HepG2 (cell line): ENCODE measurements at regions of chr2 and their contacts with region 1.

Region 1: DNA sequence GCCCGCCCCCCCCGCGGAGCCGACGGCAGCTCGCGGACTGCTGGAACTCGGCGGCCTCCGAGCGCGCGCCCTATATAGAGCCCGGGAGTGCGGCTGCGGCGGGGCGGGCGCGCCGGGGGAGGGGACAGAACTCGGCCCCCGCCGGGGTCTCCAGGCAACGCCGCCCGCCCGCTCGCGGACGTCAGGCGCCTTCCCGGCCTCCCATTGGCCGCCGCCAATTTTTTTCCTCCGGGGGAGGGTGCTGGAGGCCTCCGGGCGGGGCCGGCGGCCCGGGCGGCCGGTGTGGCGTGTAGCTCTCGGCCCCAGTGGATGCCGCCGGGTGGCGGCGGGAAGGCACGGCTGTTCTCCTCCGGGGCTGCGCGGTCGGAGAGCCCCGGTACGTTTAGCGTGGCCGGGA is at the start of gene ZFP36L2:
- DNase-seq: peak; percentile 92
- ATAC-seq: peak; percentile 63
- H3K4me3 ChIP-seq: peak within 1 kb of the TSS; percentile 80 to 97 (median 89)
- H3K27ac ChIP-seq: peak within 1 kb of the TSS; percentile 95
- H3K4me1 ChIP-seq: peaks cover 54% of the 10 kb centered on the region
- H3K27me3 ChIP-seq: no peaks in the 10 kb centered on the region
- CTCF ChIP-seq: no peak; the same call in 1 of the 2 replicates
- EP300 ChIP-seq: peak in 1 of 2 experiments; percentile 15; a peak in 1 of 4 replicates
- POLR2A ChIP-seq: peak in 1 of 2 experiments; percentile 98; a peak in 2 of 4 replicates
- RAD21 ChIP-seq: peak; percentile 36; the same call in 1 of the 2 replicates
- total RNA-seq, gene ZFP36L2: 21.8 and 32.5 TPM in 2 replicates

Region 2: DNA sequence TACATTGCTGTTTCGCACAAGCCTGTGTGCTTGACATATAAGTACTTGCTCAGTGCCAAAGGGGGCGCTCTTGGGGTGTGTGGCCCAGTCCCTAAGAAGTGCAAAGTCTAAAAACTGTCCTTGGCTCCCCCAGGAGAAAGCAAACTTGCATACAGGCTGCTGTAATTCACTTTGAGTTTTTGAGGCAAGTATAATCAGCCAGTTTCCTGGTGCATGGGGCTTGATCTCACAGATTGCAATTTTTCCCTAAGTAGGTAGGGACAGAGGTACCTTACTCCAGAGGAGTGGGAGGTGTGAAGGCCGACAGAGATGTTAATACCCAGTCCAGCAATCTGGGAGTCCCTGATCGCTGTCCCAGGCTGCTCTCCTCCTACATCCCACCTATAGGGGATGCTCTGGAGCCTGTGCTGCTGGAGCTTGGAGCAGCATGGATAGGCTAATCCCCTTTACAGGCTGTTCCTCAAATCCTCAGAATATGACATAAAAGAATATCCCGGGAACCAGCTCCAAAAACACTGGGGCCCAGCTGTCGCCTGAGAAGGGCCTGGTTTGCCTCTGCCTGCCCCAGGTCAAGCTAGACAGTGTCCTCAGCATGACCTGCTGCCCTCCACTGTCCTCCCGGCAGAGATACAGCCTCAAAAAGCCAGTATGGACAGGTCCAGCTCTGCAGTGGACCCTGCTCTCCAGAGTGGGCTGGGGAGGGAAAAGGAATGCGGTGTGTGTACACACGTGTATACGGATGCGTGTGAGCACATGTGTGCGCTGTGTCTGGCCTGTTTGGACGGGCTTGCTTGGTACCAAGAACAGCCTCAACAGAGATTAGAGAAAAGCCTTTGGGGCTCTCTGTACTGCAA is 297.6 kb before region 1 on chr2:
- CTCF ChIA-PET with region 1: interaction called, 3 read pairs
- POLR2A ChIA-PET with region 1: interaction called, 37 read pairs
- in situ Hi-C with region 1: loop called (anchors 5 kb)
- intact Hi-C with region 1: no loop called
- DNase-seq: peak; percentile 90
- ATAC-seq: peak; percentile 54
- H3K4me3 ChIP-seq: peak overlapping the region; percentile 52 to 74 (median 62)
- H3K27ac ChIP-seq: peak overlapping the region; percentile 88
- H3K4me1 ChIP-seq: peaks cover 98% of the 10 kb centered on the region
- H3K27me3 ChIP-seq: no peaks in the 10 kb centered on the region
- CTCF ChIP-seq: peak; percentile 78
- EP300 ChIP-seq: peak in 1 of 2 experiments; percentile 70; a peak in 1 of 4 replicates
- POLR2A ChIP-seq: no peak
- RAD21 ChIP-seq: no peak

Region 3: DNA sequence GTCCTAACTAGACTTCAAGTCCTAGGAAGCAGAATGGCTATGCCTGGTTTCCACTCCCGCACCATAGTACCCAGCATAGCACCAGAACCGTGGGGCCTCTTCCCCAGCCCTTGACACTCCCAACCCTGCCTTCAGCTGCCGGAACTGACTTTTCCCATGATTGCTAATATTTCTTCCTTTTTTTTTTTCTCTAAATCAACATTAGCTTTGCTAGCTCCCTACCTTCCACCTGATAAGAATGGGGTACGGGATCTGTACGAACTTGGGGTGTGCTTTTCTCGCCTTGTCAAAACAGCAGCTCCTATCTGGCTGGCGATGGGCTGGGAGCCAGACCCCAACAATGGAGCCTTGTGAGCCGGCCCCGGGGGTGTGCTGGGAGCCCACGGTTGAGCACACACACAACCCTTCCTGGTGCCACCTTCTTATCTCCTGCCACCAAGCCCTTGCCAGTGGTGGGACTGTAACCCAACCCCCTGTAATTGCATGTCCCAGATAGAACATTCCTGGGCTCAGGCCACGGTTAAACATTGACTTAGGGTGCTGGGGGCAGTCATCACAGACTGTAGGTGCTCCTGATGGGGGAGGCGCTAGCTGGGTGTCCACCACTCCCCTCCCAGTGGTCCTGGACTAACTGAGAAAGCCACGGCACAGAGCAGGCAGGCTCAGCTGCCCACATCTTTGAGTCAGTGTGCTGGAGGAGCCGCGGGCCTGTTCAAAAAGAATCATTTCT is 221.1 kb before region 1 on chr2:
- CTCF ChIA-PET with region 1: no interaction called
- POLR2A ChIA-PET with region 1: interaction called, 22 read pairs
- in situ Hi-C with region 1: no loop called
- intact Hi-C with region 1: no loop called
- DNase-seq: peak; percentile 99
- ATAC-seq: peak; percentile 96
- H3K4me3 ChIP-seq: peak overlapping the region; percentile 27 to 67 (median 39); a peak in 5 of 6 replicates
- H3K27ac ChIP-seq: peak overlapping the region; percentile 75
- H3K4me1 ChIP-seq: peaks cover 85% of the 10 kb centered on the region
- H3K27me3 ChIP-seq: no peaks in the 10 kb centered on the region
- CTCF ChIP-seq: peak; percentile 54
- EP300 ChIP-seq: peak in 1 of 2 experiments; percentile 90; a peak in 2 of 4 replicates
- POLR2A ChIP-seq: peak; percentile 36 to 92; a peak in 3 of 4 replicates
- RAD21 ChIP-seq: no peak

Region 4: DNA sequence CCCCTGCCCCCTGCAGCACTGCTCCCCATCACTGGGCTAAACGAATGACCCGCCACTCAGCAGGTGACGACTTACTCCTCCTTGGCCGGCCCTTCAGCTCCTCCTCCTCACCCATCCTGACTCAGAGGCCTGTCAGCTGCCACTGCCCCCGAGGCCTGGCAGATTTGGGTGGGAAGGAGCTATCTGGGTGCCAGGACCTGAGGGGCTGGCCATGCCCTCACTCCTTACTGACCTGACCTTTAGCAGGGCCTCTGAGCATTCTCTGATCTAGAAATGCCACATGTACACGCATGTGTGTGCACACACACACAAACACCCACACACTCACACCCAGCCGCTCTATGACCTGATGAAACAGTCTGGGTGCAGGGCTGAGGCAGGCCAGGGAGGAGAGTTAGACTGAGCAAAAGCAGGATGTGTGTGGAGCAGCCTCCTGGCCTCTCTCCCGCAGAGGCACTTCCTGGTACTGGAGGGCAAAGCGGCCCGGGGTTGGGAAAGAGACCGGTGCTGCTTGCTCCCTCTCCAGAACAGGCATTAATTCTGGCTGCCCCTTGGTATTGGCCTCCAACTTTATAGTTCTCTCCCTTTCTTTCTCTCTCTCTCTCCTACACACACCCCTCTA is 68.2 kb before region 1 on chr2:
- CTCF ChIA-PET with region 1: interaction called, 3 read pairs
- POLR2A ChIA-PET with region 1: interaction called, 76 read pairs
- in situ Hi-C with region 1: loop called (anchors 10 kb)
- intact Hi-C with region 1: loop called (anchors 2 kb)
- DNase-seq: peak; percentile 74
- ATAC-seq: peak; percentile 47
- H3K4me3 ChIP-seq: peak overlapping the region; percentile 39 to 70 (median 53)
- H3K27ac ChIP-seq: peak overlapping the region; percentile 57
- H3K4me1 ChIP-seq: peaks cover 90% of the 10 kb centered on the region
- H3K27me3 ChIP-seq: no peaks in the 10 kb centered on the region
- CTCF ChIP-seq: no peak
- EP300 ChIP-seq: no peak; a peak in 1 of 4 replicates
- POLR2A ChIP-seq: peak in 1 of 2 experiments; percentile 63; a peak in 3 of 4 replicates
- RAD21 ChIP-seq: 0 out of 2 replicates have a peak, but pooled peaks have one; percentile 7

Region 5: GRCh38 chr2:43210467-43211303 is 15.9 kb before region 1 on chr2:
- CTCF ChIA-PET with region 1: no interaction called
- POLR2A ChIA-PET with region 1: interaction called, 83 read pairs
- in situ Hi-C with region 1: no loop called
- intact Hi-C with region 1: no loop called
- DNase-seq: peak; percentile 72
- ATAC-seq: peak; percentile 75
- H3K4me3 ChIP-seq: peak overlapping the region in 1 of 3 experiments; percentile 38; a peak in 1 of 6 replicates
- H3K27ac ChIP-seq: peak overlapping the region; percentile 43
- H3K4me1 ChIP-seq: peaks cover 58% of the 10 kb centered on the region
- H3K27me3 ChIP-seq: no peaks in the 10 kb centered on the region
- CTCF ChIP-seq: peak; percentile 48
- EP300 ChIP-seq: peak in 1 of 2 experiments; percentile 82; a peak in 2 of 4 replicates
- POLR2A ChIP-seq: no peak
- RAD21 ChIP-seq: no peak

Region 6: GRCh38 chr2:43276962-43277391 is 50.4 kb after region 1 on chr2:
- CTCF ChIA-PET with region 1: no interaction called
- POLR2A ChIA-PET with region 1: no interaction called
- in situ Hi-C with region 1: no loop called
- intact Hi-C with region 1: no loop called
- DNase-seq: no peak
- ATAC-seq: no peak
- H3K4me3 ChIP-seq: no peak overlapping the region
- H3K27ac ChIP-seq: no peak overlapping the region
- H3K4me1 ChIP-seq: peaks cover 20% of the 10 kb centered on the region
- H3K27me3 ChIP-seq: no peaks in the 10 kb centered on the region
- CTCF ChIP-seq: no peak
- EP300 ChIP-seq: no peak
- POLR2A ChIP-seq: no peak
- RAD21 ChIP-seq: no peak

Region 7: DNA sequence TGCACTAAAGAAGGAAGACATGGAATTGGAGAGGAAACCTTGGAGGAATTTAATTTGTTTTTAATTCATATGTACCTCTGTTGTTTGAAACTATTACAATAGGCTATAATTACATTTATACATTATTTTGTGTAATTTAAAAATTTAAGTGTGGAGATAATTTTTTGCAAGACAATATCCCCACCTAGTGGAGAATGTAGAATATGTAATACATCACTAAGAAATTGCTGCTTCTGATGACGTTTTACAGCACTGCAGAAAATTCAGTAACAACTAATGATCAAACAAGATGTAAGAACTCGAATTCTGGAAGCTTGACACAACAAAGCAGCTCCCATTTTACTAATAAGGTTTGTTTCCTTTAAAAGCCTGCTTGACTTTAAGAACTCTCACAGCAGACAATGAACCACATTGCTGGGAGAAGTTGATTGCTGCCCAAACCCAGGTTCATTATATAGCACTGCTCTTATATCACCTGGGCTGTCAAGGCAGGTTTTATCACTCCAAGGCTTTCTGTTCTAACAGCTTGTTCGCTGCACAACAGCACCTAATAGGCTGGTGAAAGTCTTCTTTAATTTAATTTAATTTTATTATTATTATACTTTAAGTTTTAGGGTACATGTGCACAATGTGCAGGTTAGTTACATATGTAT is 315.9 kb after region 1 on chr2:
- CTCF ChIA-PET with region 1: interaction called, 3 read pairs
- POLR2A ChIA-PET with region 1: no interaction called
- in situ Hi-C with region 1: no loop called
- intact Hi-C with region 1: loop called (anchors 2 kb)
- DNase-seq: peak; percentile 54
- ATAC-seq: no peak
- H3K4me3 ChIP-seq: no peak overlapping the region
- H3K27ac ChIP-seq: no peak overlapping the region
- H3K4me1 ChIP-seq: peaks cover 11% of the 10 kb centered on the region
- H3K27me3 ChIP-seq: no peaks in the 10 kb centered on the region
- CTCF ChIP-seq: peak; percentile 67
- EP300 ChIP-seq: no peak
- POLR2A ChIP-seq: no peak
- RAD21 ChIP-seq: 0 out of 2 replicates have a peak, but pooled peaks have one; percentile 23